Posterior cingulate gyrus (tissue), 11 donors: ENCODE measurements at regions of chr1 and their contacts with region 1.

Region 1: DNA sequence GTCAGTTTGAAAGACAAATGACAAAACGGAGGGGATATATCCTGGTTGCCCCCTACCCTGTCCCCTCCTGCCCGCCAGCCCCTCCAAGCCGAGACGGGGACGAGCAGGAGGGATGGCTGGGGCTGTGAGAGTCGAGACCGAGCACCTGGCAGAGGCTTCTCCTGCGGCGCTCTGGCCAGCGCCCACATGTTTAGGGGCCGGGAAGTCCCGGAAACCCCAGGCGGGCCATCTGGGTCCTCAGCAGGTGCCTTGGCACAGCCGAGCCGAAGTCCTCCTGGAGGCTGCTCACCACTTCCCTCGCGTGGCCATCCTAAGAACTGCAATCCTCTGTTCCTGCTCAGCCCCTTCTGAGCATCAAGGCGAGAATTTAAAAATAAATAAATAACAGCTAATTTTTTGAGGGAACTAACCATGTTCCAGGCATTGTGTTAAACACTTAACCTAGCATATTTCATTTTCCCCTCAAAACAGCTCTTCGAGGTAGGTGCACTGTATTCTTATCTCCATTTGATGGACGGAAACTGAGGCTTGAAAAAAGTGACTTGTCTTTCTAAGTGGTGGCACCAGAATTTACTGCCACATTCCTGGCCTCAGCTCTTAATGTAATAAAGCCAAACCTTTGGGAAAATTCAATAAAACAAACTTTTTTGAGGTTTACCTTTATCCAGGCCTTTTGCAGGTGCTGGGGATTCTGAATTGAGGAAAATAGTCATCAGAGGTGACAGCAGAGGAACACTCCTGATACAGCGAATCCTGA is 3.5 kb upstream of the RIMS3 start:
- DNase-seq: peak; percentile 65 to 96 (median 88)

Region 2: GRCh38 chr1:40232444-40232843 is 436.5 kb before region 1 on chr1:
- intact Hi-C with region 1: no loop called
- DNase-seq: no peak

Region 3: DNA sequence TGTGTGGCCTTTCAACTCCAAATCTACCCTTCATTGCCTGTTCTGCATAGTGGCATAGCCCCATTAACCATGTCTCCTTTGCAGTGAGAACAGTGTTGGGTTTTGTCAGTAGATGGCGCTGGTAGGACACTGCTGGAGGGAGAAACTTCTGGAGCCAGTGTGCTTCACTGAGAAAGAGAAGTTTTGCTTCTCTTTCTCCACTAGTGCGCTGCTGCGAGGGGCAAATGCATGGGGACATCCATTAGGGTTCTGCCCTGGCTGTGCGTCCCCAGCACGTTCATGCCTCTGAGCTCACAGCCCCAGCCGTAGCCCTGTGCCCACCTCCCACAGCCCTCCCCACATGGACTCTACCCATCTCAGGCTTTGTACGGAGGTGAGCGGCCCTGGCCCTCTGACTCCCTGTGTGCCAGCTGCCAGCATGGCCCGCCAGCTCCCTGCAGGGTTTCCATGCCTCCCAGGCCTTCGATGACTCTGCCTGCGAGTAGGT is 56.6 kb before region 1 on chr1:
- intact Hi-C with region 1: loop called (anchors 5 kb)
- DNase-seq: peak in 8 of 10 donors; percentile 35 to 92 (median 72)